Activated CD8-positive, alpha-beta T cell treated with anti-CD3 and anti-CD28 coated beads, Interleukin-2, amount 10 ng/mL, durations not matched to agents 7 days and 5 days (primary cell): ENCODE measurements at regions of chr16 and their contacts with region 1.

Region 1: GRCh38 chr16:3023669-3024478 is at the starts of genes HCFC1R1 and THOC6:
- DNase-seq: peak; percentile 98
- ATAC-seq: peak; percentile 80
- H3K4me3 Mint-ChIP-seq: peak within 1 kb of the TSS; percentile 85
- H3K27ac Mint-ChIP-seq: peak within 1 kb of the TSS; percentile 94
- H3K4me1 Mint-ChIP-seq: peaks cover 56% of the 10 kb centered on the region
- H3K27me3 Mint-ChIP-seq: peaks cover 3% of the 10 kb centered on the region
- total RNA-seq, gene HCFC1R1: 41.0 to 41.7 TPM
- total RNA-seq, gene THOC6: 57.4 to 57.9 TPM

Region 2: DNA sequence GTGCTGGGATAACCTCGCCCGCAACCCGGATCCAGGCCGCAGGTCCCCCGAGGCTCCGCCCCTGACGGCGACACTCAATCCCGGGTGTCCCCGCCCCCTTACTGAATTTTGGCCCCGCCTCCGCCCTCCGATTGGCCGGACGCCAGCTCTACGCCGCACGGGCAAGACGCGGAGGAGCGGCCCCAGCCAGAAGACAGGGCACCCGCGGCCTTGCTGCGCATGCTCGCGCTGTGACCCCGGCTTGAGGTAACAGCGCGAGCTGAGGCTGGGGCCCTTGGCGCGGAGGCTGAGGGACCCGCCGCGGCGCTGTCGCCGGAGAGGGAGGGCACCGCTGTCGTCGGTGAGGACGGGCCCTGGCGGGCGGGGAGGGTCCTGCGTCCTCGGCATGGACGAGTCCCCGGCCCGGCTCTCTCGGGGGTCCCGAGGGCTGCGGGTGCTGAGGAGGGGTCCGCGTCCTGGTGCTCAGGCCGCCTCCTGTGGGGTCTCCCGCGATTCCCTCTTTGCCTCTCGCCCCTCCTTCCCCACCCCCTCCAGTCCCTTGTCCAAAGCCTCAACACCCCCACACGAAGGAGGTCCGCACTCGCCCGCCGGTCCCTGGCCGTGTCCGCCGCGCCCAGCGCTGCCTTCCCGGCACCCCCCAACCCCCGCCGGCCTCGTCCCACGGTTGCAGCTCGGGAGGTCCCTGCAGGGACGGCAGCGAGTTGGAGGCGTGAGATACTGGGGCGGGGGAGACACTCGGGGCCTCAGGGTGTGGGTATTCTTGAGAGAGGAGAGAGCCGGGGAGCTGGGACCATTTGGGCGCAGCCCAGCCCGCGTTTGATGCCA is 140.6 kb before region 1 on chr16 and contains the start of gene FLYWCH2:
- CTCF ChIA-PET with region 1: no interaction called
- POLR2A ChIA-PET with region 1: no interaction called
- DNase-seq: peak; percentile 100
- ATAC-seq: peak; percentile 88
- H3K4me3 Mint-ChIP-seq: peak within 1 kb of the TSS; percentile 87
- H3K27ac Mint-ChIP-seq: peak within 1 kb of the TSS; percentile 97
- H3K4me1 Mint-ChIP-seq: peaks cover 14% of the 10 kb centered on the region
- H3K27me3 Mint-ChIP-seq: peaks cover 4% of the 10 kb centered on the region
- total RNA-seq, gene FLYWCH2: 22.5 to 22.8 TPM

Region 3: GRCh38 chr16:2968738-2969544 is 54.9 kb before region 1 on chr16 and contains the start of gene PAQR4:
- CTCF ChIA-PET with region 1: interaction called, 13 read pairs
- POLR2A ChIA-PET with region 1: no interaction called
- DNase-seq: peak; percentile 87
- ATAC-seq: peak; percentile 76
- H3K4me3 Mint-ChIP-seq: peak within 1 kb of the TSS; percentile 79
- H3K27ac Mint-ChIP-seq: peak within 1 kb of the TSS; percentile 74
- H3K4me1 Mint-ChIP-seq: peaks cover 46% of the 10 kb centered on the region
- H3K27me3 Mint-ChIP-seq: peaks cover 19% of the 10 kb centered on the region
- total RNA-seq, gene PAQR4: 53.6 to 57.7 TPM

Region 4: DNA sequence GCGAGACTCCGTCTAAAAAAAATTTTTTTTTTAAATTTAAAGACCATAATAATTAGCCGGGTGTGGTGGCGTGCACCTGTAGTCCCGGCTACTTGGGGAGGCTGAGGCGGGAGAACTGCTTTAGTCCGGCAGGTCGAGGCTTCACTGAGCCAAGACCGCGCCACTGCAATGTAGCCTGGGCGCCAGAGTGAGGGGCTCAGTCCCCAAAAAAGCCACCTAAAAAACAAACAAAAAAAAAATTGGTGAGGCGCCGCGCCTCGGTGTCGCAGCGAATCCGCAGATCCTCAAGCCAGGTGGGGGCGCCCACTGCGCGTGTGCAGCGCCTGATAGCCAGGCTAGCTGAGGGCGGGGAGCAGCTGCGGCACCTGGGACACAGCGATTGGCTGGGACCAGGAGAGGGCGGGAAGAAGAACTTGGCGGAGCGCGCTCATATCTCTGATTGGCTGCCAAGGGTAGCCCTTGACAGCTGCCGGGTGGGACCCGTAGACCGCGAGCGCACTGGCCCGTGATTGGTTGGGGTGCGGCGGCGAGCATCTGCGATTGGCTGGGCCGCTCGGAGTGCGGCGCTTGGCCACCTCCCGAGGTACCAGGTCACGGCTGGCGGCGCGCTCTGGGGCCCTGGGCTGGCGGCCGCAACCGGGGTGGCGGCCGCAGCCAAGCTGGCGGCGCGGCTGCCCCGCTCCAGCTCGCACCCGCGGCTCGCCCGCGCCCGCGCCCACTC is 20.1 kb before region 1 on chr16:
- CTCF ChIA-PET with region 1: interaction called, 213 read pairs
- POLR2A ChIA-PET with region 1: interaction called, 4 read pairs
- DNase-seq: peak; percentile 98
- ATAC-seq: peak; percentile 100
- H3K4me3 Mint-ChIP-seq: peak overlapping the region; percentile 61
- H3K27ac Mint-ChIP-seq: peak overlapping the region; percentile 67
- H3K4me1 Mint-ChIP-seq: peaks cover 24% of the 10 kb centered on the region
- H3K27me3 Mint-ChIP-seq: peaks cover 13% of the 10 kb centered on the region

Region 5: DNA sequence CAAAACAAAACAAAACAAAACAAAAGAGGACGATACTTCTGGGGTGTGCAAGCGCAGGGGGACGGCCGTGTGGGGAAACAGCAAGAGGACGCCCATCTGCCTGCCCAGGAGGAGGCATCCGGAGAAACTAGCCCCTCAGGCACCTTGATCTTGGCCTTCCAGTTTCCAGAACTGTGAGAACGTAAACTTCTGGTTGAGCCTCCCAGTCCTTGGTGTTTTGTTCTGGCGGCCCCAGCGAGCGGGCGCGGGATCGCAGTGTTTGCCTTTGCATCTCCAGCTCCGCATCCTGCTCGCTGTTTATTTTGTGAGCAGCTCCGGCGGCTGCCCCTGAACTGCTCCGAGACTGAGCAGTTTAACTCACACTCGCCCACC is 21.5 kb after region 1 on chr16:
- CTCF ChIA-PET with region 1: interaction called, 270 read pairs
- POLR2A ChIA-PET with region 1: interaction called, 11 read pairs
- DNase-seq: peak; percentile 73
- ATAC-seq: peak; percentile 56
- H3K4me3 Mint-ChIP-seq: peak overlapping the region; percentile 83
- H3K27ac Mint-ChIP-seq: peak overlapping the region; percentile 78
- H3K4me1 Mint-ChIP-seq: peaks cover 44% of the 10 kb centered on the region
- H3K27me3 Mint-ChIP-seq: peaks cover 33% of the 10 kb centered on the region

Region 6: GRCh38 chr16:3123986-3124886 is 100.4 kb after region 1 on chr16:
- CTCF ChIA-PET with region 1: interaction called, 159 read pairs
- POLR2A ChIA-PET with region 1: interaction called, 3 read pairs
- DNase-seq: peak; percentile 99
- ATAC-seq: peak; percentile 89
- H3K4me3 Mint-ChIP-seq: peak overlapping the region; percentile 93
- H3K27ac Mint-ChIP-seq: peak overlapping the region; percentile 99
- H3K4me1 Mint-ChIP-seq: peaks cover 46% of the 10 kb centered on the region
- H3K27me3 Mint-ChIP-seq: peaks cover 4% of the 10 kb centered on the region

Region 7: DNA sequence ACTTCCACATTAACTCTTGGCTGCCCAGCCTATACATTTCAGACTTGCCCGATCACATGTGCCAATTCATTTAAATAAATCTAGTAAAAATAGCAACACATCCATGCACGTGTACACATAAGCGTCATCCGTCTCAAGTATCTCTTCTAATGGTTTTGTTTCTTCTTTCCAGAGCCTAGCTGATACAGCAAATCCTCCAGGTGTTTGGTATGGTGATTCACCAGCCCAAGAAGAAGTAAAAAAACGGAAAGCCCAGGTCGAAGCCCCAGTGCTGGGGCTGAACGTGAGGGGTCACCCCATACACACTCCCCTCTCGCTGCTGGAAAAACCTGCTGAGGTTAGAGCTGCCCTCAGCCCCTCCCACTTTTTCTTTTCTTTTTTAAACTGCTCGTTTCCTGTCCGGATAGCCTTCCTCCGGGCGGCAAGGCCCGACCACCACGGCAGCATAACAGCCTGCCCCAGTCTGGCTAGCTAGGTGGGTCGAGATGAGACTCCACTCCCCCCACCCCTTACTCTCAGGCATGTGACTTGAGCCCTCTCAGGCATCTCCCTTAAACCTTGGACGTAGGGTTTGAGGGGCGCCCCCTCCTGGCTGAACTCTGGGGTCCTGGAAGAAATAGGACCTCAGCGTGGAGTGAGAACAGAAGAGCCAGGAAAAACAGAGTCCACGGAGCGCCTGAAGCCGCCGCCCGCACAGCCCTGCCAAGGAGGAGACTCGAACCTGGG is 150.2 kb after region 1 on chr16:
- CTCF ChIA-PET with region 1: interaction called, 10 read pairs
- POLR2A ChIA-PET with region 1: no interaction called
- DNase-seq: no peak
- ATAC-seq: peak; percentile 10
- H3K4me3 Mint-ChIP-seq: peak overlapping the region; percentile 63
- H3K27ac Mint-ChIP-seq: peak overlapping the region; percentile 30
- H3K4me1 Mint-ChIP-seq: peaks cover 42% of the 10 kb centered on the region
- H3K27me3 Mint-ChIP-seq: peaks cover 56% of the 10 kb centered on the region